Tibial artery (tissue), 4 donors: ENCODE measurements at regions of chr10 and their contacts with region 1.

Region 1: GRCh38 chr10:101060036-101060950 is 1.5 kb upstream of the KAZALD1 start:
- DNase-seq: peak; percentile 93 to 97
- H3K4me3 ChIP-seq: peak overlapping the region; percentile 65 to 85
- H3K27ac ChIP-seq: peak overlapping the region; percentile 95 to 97
- H3K4me1 ChIP-seq: peaks cover 5 to 44% (median 32%) of the 10 kb centered on the region in 4 donors
- H3K27me3 ChIP-seq: no peaks in the 10 kb centered on the region
- CTCF ChIP-seq: peak; percentile 83 to 85

Region 2: DNA sequence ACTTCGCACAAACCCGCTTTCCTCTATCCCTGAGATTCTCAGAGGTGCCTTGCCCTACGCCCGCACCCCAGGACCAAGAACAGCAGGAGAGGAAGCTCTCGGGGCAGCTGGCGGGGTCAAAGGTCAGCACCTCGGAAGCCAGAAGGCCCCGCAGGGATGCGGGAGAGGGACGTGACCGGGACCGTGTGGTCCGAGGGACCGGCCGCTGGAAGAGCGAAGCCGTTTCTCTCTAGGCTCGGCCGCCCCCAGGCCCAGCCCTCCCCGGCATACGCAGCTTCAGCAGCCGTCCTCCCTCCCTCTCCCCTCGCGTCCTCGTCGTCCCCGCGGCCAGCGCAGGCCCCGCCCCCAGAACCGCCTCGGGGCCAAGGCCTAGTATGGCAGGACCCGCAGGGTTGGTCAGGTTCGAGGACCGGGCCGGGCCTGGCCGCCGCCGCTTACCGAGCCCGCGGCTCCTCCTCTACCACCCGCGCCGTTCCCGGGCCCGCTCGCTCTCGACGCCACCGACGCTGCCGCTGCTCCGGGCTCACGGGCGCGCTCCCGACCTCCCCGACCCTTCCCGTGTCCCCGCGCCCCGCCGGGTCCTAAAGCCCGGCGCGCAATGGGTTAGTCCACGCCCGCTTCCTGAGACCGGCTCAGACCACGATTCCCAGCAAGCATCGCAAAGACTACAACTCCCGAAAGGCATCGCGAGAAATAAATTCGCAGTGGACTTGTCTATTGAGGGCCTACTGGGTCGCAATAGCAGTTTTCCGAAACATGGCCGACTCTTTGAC is 995.5 kb after region 1 on chr10 and contains the start of gene ARMH3:
- intact Hi-C with region 1: loop called (anchors 10 kb)
- DNase-seq: peak; percentile 95 to 96
- H3K4me3 ChIP-seq: peak within 1 kb of the TSS; percentile 64 to 83
- H3K27ac ChIP-seq: peak within 1 kb of the TSS; percentile 91 to 96
- H3K4me1 ChIP-seq: peaks cover 0 to 33% (median 12%) of the 10 kb centered on the region in 4 donors
- H3K27me3 ChIP-seq: no peaks in the 10 kb centered on the region
- CTCF ChIP-seq: peak in 1 of 2 experiments; percentile 17